ENCODE measurements at regions of chr12 and their contacts with region 1.

Region 1: GRCh38 chr12:106247674-106248311 is at the start of gene CKAP4:
- DNase-seq: peak; percentile 81
- H3K4me3 ChIP-seq: peak within 1 kb of the TSS; percentile 65 to 82 (median 74)
- H3K27ac ChIP-seq: peak within 1 kb of the TSS; percentile 92 to 99 (median 98)
- H3K4me1 ChIP-seq: peaks cover 34 to 46% (median 37%) of the 10 kb centered on the region in 4 donors
- H3K27me3 ChIP-seq: no peaks in the 10 kb centered on the region
- CTCF ChIP-seq: no peak
- EP300 ChIP-seq: no peak
- POLR2A ChIP-seq: no peak
- total RNA-seq, gene CKAP4: 30.6 to 41.4 (median 36.2) TPM

Region 2: GRCh38 chr12:104890476-104891096 is 1357.2 kb before region 1 on chr12:
- in situ Hi-C with region 1: no loop called
- intact Hi-C with region 1: no loop called
- DNase-seq: no peak
- H3K4me3 ChIP-seq: no peak overlapping the region
- H3K27ac ChIP-seq: no peak overlapping the region
- H3K4me1 ChIP-seq: peaks cover 0 to 14% (median 4%) of the 10 kb centered on the region in 4 donors
- H3K27me3 ChIP-seq: no peaks in the 10 kb centered on the region
- CTCF ChIP-seq: no peak
- EP300 ChIP-seq: no peak
- POLR2A ChIP-seq: no peak

Region 3: DNA sequence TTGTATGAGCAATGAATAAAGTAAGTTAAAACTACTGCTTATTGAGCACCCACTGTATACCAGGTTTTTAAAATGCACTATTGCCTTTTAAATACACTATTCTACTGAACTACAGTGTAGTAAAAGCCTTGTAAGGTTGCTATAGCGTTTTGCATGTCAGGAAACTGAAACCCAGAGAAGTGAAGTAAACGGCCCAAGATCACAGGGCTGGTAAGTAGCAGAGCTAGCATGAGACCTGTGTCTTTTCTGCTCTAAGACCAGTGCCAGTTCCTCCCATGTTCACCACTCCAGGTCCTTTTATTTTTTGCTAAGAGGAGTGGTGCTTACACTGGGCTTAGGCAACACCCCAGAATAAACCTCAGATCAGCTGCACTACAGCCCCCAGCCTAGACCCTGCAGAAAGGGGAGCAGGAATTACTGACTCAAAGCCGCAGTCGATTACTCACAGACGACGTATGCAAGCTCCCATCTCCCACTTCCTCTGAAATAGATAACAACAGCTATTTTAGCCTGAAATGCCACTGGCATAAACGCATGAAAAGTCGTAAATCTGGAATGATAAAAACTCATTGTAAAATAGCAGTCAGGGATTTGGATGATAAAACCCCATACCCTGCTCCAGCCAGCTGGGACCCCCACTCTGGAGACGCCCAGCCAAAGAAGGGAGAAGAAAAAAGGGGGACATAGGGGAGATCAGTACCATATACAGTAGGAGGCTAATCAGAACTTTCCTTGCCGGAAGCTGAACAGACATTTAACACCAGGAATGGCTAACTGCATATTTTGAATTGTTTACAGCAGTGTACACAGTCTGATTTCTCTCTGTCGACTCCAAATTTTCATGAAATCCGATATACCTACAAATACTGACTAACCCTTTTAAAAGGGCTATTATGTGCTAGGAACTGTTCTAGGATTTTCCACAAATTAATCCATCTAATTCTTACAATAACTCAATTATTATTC is 217.3 kb before region 1 on chr12:
- in situ Hi-C with region 1: no loop called
- intact Hi-C with region 1: no loop called
- DNase-seq: no peak
- H3K4me3 ChIP-seq: no peak overlapping the region
- H3K27ac ChIP-seq: no peak overlapping the region
- H3K4me1 ChIP-seq: no peaks in the 10 kb centered on the region
- H3K27me3 ChIP-seq: no peaks in the 10 kb centered on the region
- CTCF ChIP-seq: no peak
- EP300 ChIP-seq: no peak
- POLR2A ChIP-seq: no peak

Region 4: GRCh38 chr12:106179086-106179485 is 68.7 kb before region 1 on chr12:
- in situ Hi-C with region 1: no loop called
- intact Hi-C with region 1: no loop called
- DNase-seq: no peak
- H3K4me3 ChIP-seq: no peak overlapping the region
- H3K27ac ChIP-seq: peak overlapping the region in 2 of 4 donors; percentile 3 to 31
- H3K4me1 ChIP-seq: no peaks in the 10 kb centered on the region
- H3K27me3 ChIP-seq: no peaks in the 10 kb centered on the region
- CTCF ChIP-seq: no peak
- EP300 ChIP-seq: no peak
- POLR2A ChIP-seq: no peak

Region 5: DNA sequence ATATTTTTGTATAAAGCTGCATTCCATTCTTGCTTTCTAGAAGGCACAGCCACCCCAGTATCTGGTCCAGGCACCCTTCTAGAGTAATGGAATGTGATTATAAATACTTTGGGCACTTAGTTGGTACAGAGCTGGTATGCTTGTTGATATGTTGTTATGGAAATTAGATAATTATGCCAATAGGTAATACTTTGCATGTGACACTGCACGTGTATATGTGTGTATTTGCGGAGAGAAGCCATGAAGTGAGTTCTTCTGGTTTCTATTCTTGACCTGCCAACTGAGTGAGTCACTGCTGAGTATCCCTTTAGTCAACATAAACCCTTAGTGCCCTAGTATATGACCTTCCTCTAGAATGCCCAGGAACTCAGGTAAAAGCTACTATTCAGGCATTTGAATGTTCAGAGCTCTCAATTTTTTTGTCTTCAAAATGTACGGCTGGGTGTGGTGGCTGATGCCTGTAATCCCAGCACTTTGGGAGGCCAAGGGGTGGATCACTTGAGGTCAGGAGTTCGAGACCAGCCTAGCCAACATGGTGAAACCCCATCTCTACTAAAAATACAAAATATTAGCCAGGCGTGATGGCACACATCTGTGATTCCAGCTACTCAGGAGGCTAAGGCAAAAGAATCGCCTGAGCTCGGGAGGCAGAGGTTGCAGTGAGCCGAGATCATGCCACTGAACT is 48.5 kb after region 1 on chr12:
- in situ Hi-C with region 1: loop called in 1 of 4 experiments (anchors 10 kb)
- intact Hi-C with region 1: no loop called
- DNase-seq: no peak
- H3K4me3 ChIP-seq: no peak overlapping the region
- H3K27ac ChIP-seq: no peak overlapping the region
- H3K4me1 ChIP-seq: peaks cover 0 to 23% (median 12%) of the 10 kb centered on the region in 4 donors
- H3K27me3 ChIP-seq: no peaks in the 10 kb centered on the region
- CTCF ChIP-seq: no peak
- EP300 ChIP-seq: no peak
- POLR2A ChIP-seq: no peak

Region 6: GRCh38 chr12:106321139-106321850 is 73.5 kb after region 1 on chr12:
- in situ Hi-C with region 1: no loop called
- intact Hi-C with region 1: no loop called
- DNase-seq: no peak
- H3K4me3 ChIP-seq: no peak overlapping the region
- H3K27ac ChIP-seq: no peak overlapping the region
- H3K4me1 ChIP-seq: no peaks in the 10 kb centered on the region
- H3K27me3 ChIP-seq: no peaks in the 10 kb centered on the region
- CTCF ChIP-seq: no peak
- EP300 ChIP-seq: no peak
- POLR2A ChIP-seq: no peak

Region 7: DNA sequence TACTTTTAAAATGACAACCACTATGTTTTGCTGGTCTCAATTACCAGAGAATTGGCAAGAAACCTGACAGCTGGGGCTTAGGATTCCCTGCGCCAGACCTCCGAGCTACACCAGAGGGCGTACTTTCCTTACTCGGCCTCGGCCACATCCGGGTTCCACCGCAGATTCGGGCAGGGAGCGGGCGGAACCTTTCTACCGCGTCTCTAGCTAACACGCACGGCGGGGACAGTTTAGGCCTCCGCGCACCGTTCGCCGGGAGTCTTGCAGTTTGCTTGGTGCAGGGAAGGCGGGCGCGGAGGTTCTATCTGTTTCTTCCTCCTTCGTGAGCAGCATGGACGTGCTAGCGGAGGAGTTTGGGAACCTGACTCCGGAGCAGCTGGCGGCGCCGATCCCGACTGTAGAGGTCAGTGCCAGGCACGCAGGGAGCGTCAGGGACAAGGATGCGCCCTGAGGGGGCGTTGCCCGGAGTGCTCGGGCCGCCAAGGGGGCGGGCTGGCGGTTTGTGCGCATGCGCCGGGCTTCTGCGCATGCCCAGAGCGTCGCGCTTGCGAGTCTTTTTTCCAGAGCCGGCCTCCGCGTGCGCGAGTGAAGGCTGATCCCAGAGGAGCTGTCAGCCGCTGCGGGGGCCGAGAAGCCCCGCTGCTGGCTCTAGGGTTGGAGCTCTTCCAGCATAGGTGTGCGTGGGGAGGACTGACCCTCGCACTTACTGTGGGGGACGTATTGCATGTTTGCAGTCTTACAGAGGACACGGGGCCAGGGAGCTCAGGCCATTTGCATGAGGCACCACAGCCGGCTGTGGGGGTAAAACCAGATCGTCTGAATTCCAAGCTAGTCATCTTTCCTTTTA is 110.0 kb after region 1 on chr12 and contains the start of gene POLR3B:
- in situ Hi-C with region 1: no loop called
- intact Hi-C with region 1: loop called (anchors 10 kb)
- DNase-seq: peak; percentile 96
- H3K4me3 ChIP-seq: peak within 1 kb of the TSS; percentile 37 to 71 (median 58)
- H3K27ac ChIP-seq: peak within 1 kb of the TSS; percentile 91 to 96 (median 94)
- H3K4me1 ChIP-seq: peaks cover 9 to 22% (median 16%) of the 10 kb centered on the region in 4 donors
- H3K27me3 ChIP-seq: no peaks in the 10 kb centered on the region
- CTCF ChIP-seq: peak; percentile 81 to 94 (median 85)
- EP300 ChIP-seq: no peak
- POLR2A ChIP-seq: peak; percentile 90
- total RNA-seq, gene POLR3B: 5.6 to 8.4 (median 7.7) TPM

Measured in transverse colon (tissue), 4 donors.